ENCODE measurements at regions of chr2 and their contacts with region 1.

Region 1: DNA sequence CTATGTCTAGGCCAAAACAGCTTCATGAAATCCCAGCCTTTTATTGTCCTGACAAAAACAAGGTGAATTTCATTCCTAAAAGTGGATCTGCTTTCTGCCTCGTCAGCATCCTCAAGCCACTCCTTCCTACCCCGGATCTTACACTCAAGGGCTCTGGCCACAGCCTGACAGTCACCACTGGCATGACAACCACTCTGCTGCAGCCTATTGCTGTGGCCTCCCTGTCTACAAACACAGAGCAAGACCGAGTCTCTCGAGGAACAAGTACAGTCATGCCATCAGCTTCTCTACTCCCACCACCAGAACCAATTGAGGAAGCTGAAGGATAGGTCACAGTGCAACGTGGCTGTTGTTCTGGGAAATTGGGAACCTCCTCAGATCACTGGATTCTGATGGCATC is 106.1 kb downstream of the ICA1L start:
- DNase-seq: no peak
- H3K4me3 Mint-ChIP-seq: no peak overlapping the region
- H3K27ac Mint-ChIP-seq: no peak overlapping the region
- H3K4me1 Mint-ChIP-seq: peaks cover 25% of the 10 kb centered on the region
- H3K27me3 Mint-ChIP-seq: no peaks in the 10 kb centered on the region

Region 2: DNA sequence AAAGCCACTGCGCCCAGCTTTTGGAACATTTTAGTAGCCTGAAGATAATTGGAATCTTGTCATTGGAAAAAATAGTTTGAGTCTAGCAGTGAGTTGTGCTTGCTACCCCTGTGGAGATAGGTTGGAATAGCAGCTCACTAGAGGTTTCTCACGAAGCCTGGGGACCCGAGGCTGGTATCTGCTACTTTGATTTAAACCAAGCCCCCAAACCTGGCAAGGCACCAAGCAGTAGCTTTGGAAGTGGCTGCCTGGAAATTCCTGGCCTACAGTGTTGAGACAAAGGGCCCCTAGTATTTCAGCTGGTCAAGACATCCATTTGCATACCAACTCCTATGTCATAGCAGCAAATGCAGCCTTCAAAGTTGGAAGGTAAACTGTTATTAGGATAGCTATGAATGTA is 457.7 kb before region 1 on chr2:
- intact Hi-C with region 1: no loop called
- DNase-seq: no peak
- H3K4me3 Mint-ChIP-seq: no peak overlapping the region
- H3K27ac Mint-ChIP-seq: no peak overlapping the region
- H3K4me1 Mint-ChIP-seq: peaks cover 5% of the 10 kb centered on the region
- H3K27me3 Mint-ChIP-seq: no peaks in the 10 kb centered on the region

Region 3: GRCh38 chr2:202588647-202589581 is 176.5 kb before region 1 on chr2:
- intact Hi-C with region 1: loop called (anchors 10 kb)
- DNase-seq: peak; percentile 89
- H3K4me3 Mint-ChIP-seq: no peak overlapping the region
- H3K27ac Mint-ChIP-seq: peak overlapping the region; percentile 38
- H3K4me1 Mint-ChIP-seq: peaks cover 10% of the 10 kb centered on the region
- H3K27me3 Mint-ChIP-seq: peaks cover 3% of the 10 kb centered on the region

Region 4: GRCh38 chr2:202902323-202902722 is 136.9 kb after region 1 on chr2:
- intact Hi-C with region 1: no loop called
- DNase-seq: no peak
- H3K4me3 Mint-ChIP-seq: no peak overlapping the region
- H3K27ac Mint-ChIP-seq: no peak overlapping the region
- H3K4me1 Mint-ChIP-seq: peaks cover 5% of the 10 kb centered on the region
- H3K27me3 Mint-ChIP-seq: no peaks in the 10 kb centered on the region

Measured in activated CD4-positive, alpha-beta T cell treated with anti-CD3 and anti-CD28 coated beads, Interleukin-2, amount 10 ng/mL, durations not matched to agents 24 days and 14 days (primary cell).